ENCODE measurements at regions of chr4 and their contacts with region 1.

Region 1: DNA sequence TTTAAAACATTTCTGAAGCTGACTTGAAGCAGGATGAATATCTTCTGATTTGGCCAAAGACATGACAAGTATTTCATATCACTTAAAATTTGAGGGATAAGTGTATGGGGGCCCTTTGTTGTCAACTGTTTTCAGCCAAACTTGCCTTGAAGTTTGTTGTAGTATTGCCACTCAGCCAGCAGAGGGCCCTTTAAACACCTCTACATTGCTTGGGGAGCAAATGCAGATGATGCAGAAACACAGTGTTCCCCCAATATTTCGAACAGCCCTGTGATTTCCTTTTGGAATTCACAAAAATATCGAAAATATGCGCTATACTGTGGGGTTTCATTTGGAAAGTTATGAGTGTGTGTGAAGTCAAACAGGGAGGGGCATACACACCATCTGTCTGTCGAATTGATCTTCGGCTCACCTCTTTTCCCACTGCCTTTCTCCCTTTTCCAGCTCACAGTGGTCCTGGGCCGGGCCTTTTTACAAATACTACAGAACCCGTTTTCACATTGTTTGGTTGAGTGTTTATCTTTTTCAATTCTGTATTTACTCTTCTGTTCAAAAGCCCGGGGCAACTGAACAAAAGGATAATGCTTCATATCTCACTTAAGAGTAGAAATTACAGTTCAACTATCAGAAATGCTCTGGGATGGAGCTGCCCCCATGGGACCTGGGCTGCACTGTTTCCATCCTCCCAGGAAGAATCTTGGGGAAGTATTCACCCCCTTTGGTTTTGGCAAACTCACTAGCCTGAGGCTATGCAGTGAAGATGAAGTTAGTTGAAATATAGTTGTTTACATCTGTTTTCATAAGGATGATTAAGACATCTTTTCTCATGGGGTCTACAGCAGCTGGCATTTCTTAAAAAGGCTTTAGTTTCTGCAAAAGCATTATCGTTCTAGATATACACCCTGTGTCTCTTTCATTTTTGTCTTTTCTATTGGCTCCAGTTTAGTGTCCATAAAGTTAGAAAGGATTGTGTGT is 137.6 kb downstream of the EGF start:
- DNase-seq: peak; percentile 47
- CTCF ChIP-seq: peak; percentile 78

Region 2: DNA sequence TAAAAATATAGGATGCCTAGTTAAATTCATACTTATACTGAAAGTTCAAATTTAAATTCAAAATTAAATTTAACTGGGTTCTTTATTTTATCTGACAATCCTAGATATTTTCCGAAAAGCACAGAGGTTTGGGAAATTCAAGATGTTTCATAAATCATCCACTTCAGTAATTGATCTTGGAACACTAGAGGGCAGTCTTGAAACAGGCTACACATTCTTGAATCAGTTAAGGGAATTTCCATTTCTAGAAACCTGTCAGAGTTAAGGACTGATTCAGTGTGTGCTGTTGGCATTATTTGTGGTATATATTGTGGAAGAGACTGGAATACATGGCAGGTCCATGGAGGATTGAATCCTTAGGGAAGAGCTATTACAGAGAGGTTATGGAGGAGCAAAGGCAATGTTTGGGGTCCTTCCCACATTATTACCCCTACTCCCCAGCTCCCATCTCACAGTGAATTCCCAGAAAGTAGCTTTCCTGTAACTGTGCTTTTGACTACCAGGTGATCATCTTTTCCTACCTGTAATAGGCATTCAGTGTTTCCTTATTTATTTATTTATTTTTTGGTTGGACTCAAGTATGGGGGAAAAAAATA is 44.7 kb before region 1 on chr4:
- CTCF ChIA-PET with region 1: interaction called, 31 read pairs
- POLR2A ChIA-PET with region 1: no interaction called
- DNase-seq: peak; percentile 71
- CTCF ChIP-seq: peak; percentile 64

Region 3: DNA sequence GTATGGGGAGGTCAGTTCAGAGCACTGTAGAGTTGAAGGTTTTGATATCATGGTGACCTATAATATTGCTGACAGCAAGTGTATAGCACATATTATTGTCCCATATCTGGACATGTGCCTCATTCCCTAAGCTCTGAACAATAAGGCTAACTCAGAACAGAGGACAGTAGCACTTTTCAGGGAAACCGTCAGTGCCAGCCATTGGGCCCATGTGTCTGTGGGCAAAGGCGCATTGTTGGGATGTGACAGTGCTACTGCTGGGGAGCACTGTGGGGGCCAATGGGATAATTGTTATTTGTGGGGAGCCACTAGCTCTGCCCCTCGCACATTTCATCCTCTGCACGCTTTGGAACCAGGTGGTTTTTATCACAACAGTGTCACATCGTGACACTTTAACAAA is 11.9 kb after region 1 on chr4:
- CTCF ChIA-PET with region 1: interaction called, 26 read pairs
- POLR2A ChIA-PET with region 1: no interaction called
- DNase-seq: no peak
- CTCF ChIP-seq: no peak

Region 4: GRCh38 chr4:110207233-110207632 is 157.0 kb after region 1 on chr4:
- CTCF ChIA-PET with region 1: interaction called, 18 read pairs
- POLR2A ChIA-PET with region 1: no interaction called
- DNase-seq: no peak
- CTCF ChIP-seq: no peak

Region 5: GRCh38 chr4:110296892-110297291 is 246.7 kb after region 1 on chr4:
- CTCF ChIA-PET with region 1: interaction called, 10 read pairs
- POLR2A ChIA-PET with region 1: no interaction called
- DNase-seq: peak; percentile 32
- CTCF ChIP-seq: no peak

Measured in GM10248 (cell line).